Activated CD4-positive, alpha-beta T cell treated with anti-CD3 and anti-CD28 coated beads for 36 hours (primary cell): ENCODE measurements at regions of chr2 and their contacts with region 1.

Region 1: GRCh38 chr2:38377050-38377828 is at the start of gene ATL2:
- DNase-seq: peak; percentile 97
- ATAC-seq: peak; percentile 79
- H3K4me3 Mint-ChIP-seq: peak within 1 kb of the TSS; percentile 90
- H3K27ac Mint-ChIP-seq: peak within 1 kb of the TSS; percentile 90
- H3K4me1 Mint-ChIP-seq: peaks cover 73% of the 10 kb centered on the region
- H3K27me3 Mint-ChIP-seq: no peaks in the 10 kb centered on the region
- total RNA-seq, gene ATL2: 29.9 to 50.3 TPM

Region 2: DNA sequence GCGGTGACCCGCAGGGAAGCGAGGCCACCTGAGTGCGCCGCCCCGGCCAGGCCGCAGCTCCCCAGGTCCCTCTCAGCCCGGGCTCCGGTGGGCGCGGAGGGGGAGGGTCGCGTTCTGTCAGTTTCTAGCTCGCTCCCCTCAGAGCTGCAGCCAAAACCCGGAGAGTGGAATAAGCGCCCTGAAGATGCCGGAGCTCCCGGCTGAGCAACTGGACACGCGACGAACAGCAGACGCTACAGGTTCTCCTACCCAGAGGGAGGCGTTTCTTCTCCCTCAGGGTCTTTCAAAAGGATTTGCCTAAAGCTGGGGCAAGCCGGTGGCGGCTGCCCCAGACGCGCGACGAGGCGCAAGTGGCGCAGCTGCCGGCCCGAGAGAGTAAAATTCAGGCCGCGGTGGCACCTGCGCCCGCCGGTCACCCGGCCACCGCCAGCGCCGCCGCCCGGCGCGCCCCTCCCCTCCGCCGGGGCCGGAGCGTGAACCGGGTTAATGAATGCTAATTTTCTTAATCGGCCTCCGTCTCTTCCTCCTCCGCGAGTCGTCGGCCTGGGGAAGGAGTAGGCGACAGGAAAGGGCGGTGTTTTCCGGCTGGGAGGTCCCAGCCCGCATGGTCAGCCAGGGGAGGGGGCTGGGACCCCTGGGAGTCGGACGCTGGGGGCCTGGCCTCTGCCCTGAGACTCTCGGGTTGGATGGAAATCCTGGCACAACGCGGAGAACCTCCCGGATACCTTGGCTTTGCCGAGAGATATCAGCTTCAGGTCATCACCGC is 705.0 kb before region 1 on chr2:
- CTCF ChIA-PET with region 1: no interaction called
- POLR2A ChIA-PET with region 1: no interaction called
- intact Hi-C with region 1: loop called in 1 of 2 experiments (anchors 5 kb)
- DNase-seq: peak; percentile 80
- ATAC-seq: peak; percentile 34
- H3K4me3 Mint-ChIP-seq: peak overlapping the region; percentile 83
- H3K27ac Mint-ChIP-seq: peak overlapping the region; percentile 83
- H3K4me1 Mint-ChIP-seq: peaks cover 40% of the 10 kb centered on the region
- H3K27me3 Mint-ChIP-seq: no peaks in the 10 kb centered on the region

Region 3: DNA sequence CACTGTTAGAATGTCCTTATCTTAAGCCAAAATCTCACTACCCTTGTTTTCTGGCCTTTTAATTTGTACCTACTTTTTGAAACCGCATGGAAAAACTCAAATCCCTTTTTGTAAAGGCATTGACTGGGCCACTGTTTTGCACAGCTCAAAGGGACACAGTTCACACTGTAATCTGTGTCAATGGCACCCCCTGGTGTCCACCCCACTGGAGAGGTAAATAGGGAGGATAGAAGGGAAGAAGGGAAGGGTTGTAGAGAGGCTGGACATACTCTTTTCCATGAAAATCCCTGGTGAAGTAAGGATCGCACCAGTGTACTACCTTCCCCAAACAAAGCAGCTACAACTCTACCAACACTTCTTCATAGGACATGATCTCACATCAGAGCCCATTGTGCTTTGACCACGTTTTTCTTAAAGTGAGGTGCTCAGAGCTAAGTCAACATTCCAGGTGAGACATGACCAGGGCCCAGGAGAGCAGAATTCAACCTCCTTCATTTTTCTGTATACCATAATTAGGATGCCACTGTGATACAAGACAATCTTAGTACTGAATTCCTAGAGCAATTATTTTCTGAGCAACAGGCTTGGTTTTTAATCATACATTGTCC is 544.5 kb before region 1 on chr2:
- CTCF ChIA-PET with region 1: no interaction called
- POLR2A ChIA-PET with region 1: no interaction called
- intact Hi-C with region 1: no loop called
- DNase-seq: peak; percentile 90
- ATAC-seq: peak; percentile 76
- H3K4me3 Mint-ChIP-seq: no peak overlapping the region
- H3K27ac Mint-ChIP-seq: peak overlapping the region; percentile 32
- H3K4me1 Mint-ChIP-seq: peaks cover 22% of the 10 kb centered on the region
- H3K27me3 Mint-ChIP-seq: no peaks in the 10 kb centered on the region

Region 4: DNA sequence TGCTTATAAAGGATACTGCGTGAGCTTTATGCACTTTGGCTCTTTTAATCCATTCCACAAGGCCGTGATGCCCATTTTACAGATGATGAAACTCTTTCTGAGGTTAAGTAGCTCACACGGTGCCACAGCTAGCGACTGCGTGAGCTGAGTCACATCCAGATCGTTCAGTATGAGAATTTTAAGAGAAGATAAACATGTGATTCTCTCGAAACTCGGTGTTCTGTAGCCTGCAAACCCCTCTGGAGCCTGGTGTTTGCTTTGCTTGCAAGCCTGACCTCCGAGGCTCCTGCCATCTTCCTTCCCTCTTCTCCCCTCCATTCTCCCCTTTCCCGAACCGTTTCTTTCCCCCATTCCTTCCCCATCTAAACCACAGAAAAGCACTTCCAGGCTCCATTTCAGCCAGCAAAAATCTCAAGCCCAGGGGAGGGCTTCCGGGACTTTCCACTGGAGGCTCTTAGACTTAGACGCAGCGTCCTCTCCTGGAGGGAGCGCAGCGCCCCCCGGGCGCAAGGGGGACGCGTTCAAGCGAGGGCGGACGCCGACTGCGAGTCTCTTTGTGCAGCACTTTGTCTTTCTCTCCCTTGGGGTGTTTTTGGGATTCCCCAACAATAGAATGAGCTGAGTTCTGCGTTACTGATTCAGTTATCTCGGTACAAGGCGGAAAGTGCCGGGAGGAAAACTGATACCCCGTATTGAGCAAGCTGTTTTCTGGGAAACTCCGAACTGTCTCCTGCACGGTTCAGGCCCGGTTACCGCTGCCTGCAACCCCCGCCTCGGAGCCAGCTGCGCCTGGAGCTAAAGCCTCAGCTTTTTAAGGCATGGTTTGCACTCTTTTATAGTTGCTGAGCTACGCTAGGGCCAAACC is 339.2 kb before region 1 on chr2:
- CTCF ChIA-PET with region 1: no interaction called
- POLR2A ChIA-PET with region 1: no interaction called
- intact Hi-C with region 1: no loop called
- DNase-seq: peak; percentile 71
- ATAC-seq: peak; percentile 92
- H3K4me3 Mint-ChIP-seq: peak overlapping the region; percentile 46
- H3K27ac Mint-ChIP-seq: peak overlapping the region; percentile 69
- H3K4me1 Mint-ChIP-seq: peaks cover 27% of the 10 kb centered on the region
- H3K27me3 Mint-ChIP-seq: peaks cover 38% of the 10 kb centered on the region

Region 5: GRCh38 chr2:38315707-38316333 is 61.4 kb before region 1 on chr2:
- CTCF ChIA-PET with region 1: interaction called, 18 read pairs
- POLR2A ChIA-PET with region 1: no interaction called
- intact Hi-C with region 1: loop called (anchors 1 to 2 kb)
- DNase-seq: peak; percentile 26
- ATAC-seq: peak; percentile 100
- H3K4me3 Mint-ChIP-seq: no peak overlapping the region
- H3K27ac Mint-ChIP-seq: no peak overlapping the region
- H3K4me1 Mint-ChIP-seq: peaks cover 16% of the 10 kb centered on the region
- H3K27me3 Mint-ChIP-seq: no peaks in the 10 kb centered on the region

Region 6: DNA sequence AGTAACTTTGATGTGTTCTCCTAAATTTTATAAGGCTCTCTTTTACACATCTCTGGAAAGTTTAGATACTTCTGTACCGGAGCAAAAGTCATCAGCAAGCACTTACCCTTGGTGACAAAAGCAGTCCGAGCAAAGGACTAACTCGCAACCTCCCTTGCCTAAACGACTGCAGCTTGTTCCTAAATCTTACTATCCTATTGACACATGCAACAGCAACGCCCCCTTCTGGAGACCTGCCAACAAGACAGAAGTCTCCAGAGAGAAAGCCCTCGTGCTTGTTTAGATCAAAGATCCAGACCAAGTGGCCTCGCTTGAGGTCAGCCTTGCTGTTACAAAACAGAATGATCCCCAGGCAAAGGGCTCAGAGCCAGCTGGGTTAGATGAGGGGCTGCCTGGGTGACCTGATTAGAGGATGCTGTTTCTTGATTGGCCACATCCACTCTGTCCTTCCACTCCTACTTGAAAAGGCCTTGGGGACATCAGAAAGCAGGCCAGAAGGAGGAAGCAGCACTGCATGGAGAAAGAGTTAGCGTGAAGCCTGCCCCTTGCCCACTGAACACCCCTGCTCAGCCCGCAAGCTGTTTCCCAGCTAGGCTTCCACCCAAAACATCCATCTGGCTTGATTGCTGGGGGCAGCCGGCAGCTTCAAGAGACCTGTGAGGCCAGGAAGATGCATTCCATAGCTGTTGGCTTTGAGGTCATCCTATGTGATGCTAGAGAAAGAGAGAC is 131.2 kb after region 1 on chr2:
- CTCF ChIA-PET with region 1: interaction called, 10 read pairs
- POLR2A ChIA-PET with region 1: no interaction called
- intact Hi-C with region 1: loop called (anchors 1 to 2 kb)
- DNase-seq: peak; percentile 92
- ATAC-seq: peak; percentile 95
- H3K4me3 Mint-ChIP-seq: no peak overlapping the region
- H3K27ac Mint-ChIP-seq: no peak overlapping the region
- H3K4me1 Mint-ChIP-seq: peaks cover 3% of the 10 kb centered on the region
- H3K27me3 Mint-ChIP-seq: peaks cover 5% of the 10 kb centered on the region

Region 7: DNA sequence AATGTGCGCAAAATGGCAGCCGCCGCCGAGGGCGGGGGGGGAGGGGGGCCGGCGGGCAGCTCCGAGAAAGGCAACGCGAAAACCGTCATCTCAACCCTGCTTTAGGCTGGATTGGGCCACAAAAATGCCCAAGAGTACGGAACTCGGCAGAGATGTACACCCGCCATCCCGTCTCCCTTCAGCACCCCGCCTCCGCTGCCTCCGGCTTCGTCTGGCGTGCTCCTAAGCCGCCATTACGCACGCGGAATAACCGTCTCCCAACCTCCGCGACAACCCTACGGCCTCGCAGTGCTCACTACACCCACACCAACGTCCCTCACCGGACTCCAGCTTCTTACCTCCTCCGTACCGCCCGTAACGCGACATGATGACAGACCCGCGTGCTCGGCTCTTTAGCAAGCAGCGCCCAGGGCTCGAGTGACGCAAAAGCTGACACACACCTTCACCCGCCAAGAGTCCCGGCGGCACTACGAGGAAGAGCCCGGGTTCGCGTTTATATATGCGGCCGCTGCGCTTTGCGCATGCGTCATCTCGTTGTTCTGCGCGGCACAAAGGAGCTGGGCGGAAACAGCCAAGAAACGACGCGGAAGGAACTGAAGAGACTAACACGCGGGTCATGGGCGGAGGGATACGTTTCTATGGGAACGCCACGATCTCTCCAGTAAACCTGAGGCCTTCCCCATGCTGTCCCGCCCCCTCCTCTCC is 373.8 kb after region 1 on chr2 and contains the start of gene SRSF7:
- CTCF ChIA-PET with region 1: no interaction called
- POLR2A ChIA-PET with region 1: interaction called, 10 read pairs
- intact Hi-C with region 1: loop called (anchors 1 to 2 kb)
- DNase-seq: peak; percentile 98
- ATAC-seq: peak; percentile 83
- H3K4me3 Mint-ChIP-seq: peak within 1 kb of the TSS; percentile 94
- H3K27ac Mint-ChIP-seq: peak within 1 kb of the TSS; percentile 100
- H3K4me1 Mint-ChIP-seq: peaks cover 51% of the 10 kb centered on the region
- H3K27me3 Mint-ChIP-seq: no peaks in the 10 kb centered on the region
- total RNA-seq, gene SRSF7: 194 to 309 TPM